ENCODE measurements at regions of chr17 and their contacts with region 1.

Region 1: DNA sequence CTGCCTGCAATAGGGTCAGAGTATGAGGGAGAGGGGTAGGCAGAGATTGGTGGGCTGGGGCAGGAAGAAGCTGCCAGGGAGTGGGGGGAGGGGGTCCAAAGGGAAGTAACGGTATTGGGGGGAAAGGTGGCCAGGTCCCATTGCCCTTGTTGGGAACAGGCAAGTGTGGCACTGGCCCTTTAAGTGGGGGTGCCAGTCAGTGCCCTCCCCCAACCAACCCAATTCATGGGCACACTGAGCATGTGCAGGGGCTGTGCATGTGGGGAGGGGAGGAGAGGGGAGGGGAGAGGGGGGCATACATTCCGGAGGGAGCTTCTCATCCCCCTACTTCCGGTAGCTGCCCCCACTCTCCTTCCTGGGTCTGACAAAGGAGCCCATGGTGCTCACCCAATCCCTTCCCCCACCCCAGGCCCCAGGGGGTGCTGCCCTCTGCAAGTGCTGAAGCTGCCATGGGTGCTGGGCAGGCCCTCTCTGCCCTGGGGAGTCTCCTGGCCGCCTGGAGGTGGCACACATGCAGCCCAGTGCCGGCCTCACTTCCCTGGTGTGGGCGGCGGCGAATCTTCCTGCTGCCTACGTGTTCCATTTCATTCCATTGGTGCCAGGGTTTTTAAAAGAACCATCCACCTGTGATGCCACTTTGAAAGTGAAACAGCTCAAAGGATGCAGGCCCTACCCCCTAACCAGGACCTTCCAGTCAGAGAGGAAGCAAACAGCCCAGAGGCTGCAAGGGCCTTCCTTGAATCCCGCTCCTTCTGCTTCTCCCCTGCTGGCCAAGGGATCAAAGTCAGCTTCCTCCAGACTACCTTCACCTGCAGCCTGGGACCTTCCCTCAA is 11.0 kb downstream of the HEXIM2 start:
- DNase-seq: peak; percentile 10 to 68 (median 33)
- H3K4me3 ChIP-seq: peak overlapping the region; percentile 62
- H3K4me3 Mint-ChIP-seq: peak overlapping the region; percentile 51 to 81 (median 77)
- H3K27ac ChIP-seq: peak overlapping the region; percentile 0
- H3K27ac Mint-ChIP-seq: peak overlapping the region; percentile 60 to 98 (median 88)
- H3K4me1 ChIP-seq: peaks cover 23% of the 10 kb centered on the region
- H3K4me1 Mint-ChIP-seq: peaks cover 7 to 21% (median 9%) of the 10 kb centered on the region in 3 donors
- H3K27me3 ChIP-seq: no peaks in the 10 kb centered on the region
- H3K27me3 Mint-ChIP-seq: no peaks in the 10 kb centered on the region

Region 2: GRCh38 chr17:45031231-45032173 is 141.2 kb before region 1 on chr17:
- CTCF ChIA-PET with region 1: no interaction called
- POLR2A ChIA-PET with region 1: no interaction called
- DNase-seq: no peak
- H3K4me3 ChIP-seq: no peak overlapping the region
- H3K4me3 Mint-ChIP-seq: no peak overlapping the region
- H3K27ac ChIP-seq: peak overlapping the region; percentile 20
- H3K27ac Mint-ChIP-seq: no peak overlapping the region
- H3K4me1 ChIP-seq: no peaks in the 10 kb centered on the region
- H3K4me1 Mint-ChIP-seq: no peaks in the 10 kb centered on the region
- H3K27me3 ChIP-seq: no peaks in the 10 kb centered on the region
- H3K27me3 Mint-ChIP-seq: no peaks in the 10 kb centered on the region

Region 3: GRCh38 chr17:45197555-45198334 is 25.1 kb after region 1 on chr17:
- CTCF ChIA-PET with region 1: interaction called, 17 read pairs
- POLR2A ChIA-PET with region 1: no interaction called
- DNase-seq: peak; percentile 74 to 86 (median 83)
- H3K4me3 ChIP-seq: no peak overlapping the region
- H3K4me3 Mint-ChIP-seq: no peak overlapping the region
- H3K27ac ChIP-seq: no peak overlapping the region
- H3K27ac Mint-ChIP-seq: no peak overlapping the region
- H3K4me1 ChIP-seq: no peaks in the 10 kb centered on the region
- H3K4me1 Mint-ChIP-seq: peaks cover 1 to 5% (median 4%) of the 10 kb centered on the region in 3 donors
- H3K27me3 ChIP-seq: no peaks in the 10 kb centered on the region
- H3K27me3 Mint-ChIP-seq: no peaks in the 10 kb centered on the region

Region 4: GRCh38 chr17:45277216-45277849 is 104.7 kb after region 1 on chr17:
- CTCF ChIA-PET with region 1: no interaction called
- POLR2A ChIA-PET with region 1: no interaction called
- DNase-seq: peak; percentile 76 to 92 (median 83)
- H3K4me3 ChIP-seq: no peak overlapping the region
- H3K4me3 Mint-ChIP-seq: no peak overlapping the region
- H3K27ac ChIP-seq: no peak overlapping the region
- H3K27ac Mint-ChIP-seq: peak overlapping the region in 6 of 8 donors; percentile 0 to 72 (median 38)
- H3K4me1 ChIP-seq: no peaks in the 10 kb centered on the region
- H3K4me1 Mint-ChIP-seq: peaks cover 4 to 16% (median 11%) of the 10 kb centered on the region in 3 donors
- H3K27me3 ChIP-seq: no peaks in the 10 kb centered on the region
- H3K27me3 Mint-ChIP-seq: no peaks in the 10 kb centered on the region

Measured in CD8-positive, alpha-beta memory T cell (primary cell).